ENCODE measurements at regions of chr3 and their contacts with region 1.

Region 1: GRCh38 chr3:76679541-76679940 is 360.4 kb upstream of the ROBO2 start:
- DNase-seq: no peak
- H3K4me3 ChIP-seq: no peak overlapping the region
- H3K27ac ChIP-seq: no peak overlapping the region
- H3K27me3 ChIP-seq: no peaks in the 10 kb centered on the region
- CTCF ChIP-seq: no peak; the same call in 1 of the 2 replicates

Region 2: DNA sequence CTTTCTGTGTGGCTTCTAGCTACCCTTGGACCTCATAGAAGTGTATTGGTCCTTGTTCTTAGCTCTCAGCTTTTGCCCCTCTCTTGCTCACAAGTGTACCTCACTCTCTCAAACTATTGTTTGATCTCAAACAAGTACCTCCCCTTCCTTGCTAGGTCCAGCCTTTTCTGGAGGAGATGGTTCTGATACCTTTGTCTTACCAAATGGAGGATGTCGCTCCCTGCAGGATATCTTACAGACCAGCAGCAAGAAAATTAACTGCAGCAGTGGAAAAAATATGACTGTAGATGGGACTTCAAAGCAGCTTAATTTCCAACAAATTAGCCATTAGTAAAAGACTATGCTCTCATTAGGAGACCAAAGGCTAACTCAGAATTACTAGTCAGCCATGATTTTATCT is 27.8 kb before region 1 on chr3:
- CTCF ChIA-PET with region 1: no interaction called
- POLR2A ChIA-PET with region 1: no interaction called
- DNase-seq: no peak
- H3K4me3 ChIP-seq: no peak overlapping the region
- H3K27ac ChIP-seq: no peak overlapping the region
- H3K27me3 ChIP-seq: no peaks in the 10 kb centered on the region
- CTCF ChIP-seq: 0 out of 2 replicates have a peak, but pooled peaks have one; percentile 11

Region 3: DNA sequence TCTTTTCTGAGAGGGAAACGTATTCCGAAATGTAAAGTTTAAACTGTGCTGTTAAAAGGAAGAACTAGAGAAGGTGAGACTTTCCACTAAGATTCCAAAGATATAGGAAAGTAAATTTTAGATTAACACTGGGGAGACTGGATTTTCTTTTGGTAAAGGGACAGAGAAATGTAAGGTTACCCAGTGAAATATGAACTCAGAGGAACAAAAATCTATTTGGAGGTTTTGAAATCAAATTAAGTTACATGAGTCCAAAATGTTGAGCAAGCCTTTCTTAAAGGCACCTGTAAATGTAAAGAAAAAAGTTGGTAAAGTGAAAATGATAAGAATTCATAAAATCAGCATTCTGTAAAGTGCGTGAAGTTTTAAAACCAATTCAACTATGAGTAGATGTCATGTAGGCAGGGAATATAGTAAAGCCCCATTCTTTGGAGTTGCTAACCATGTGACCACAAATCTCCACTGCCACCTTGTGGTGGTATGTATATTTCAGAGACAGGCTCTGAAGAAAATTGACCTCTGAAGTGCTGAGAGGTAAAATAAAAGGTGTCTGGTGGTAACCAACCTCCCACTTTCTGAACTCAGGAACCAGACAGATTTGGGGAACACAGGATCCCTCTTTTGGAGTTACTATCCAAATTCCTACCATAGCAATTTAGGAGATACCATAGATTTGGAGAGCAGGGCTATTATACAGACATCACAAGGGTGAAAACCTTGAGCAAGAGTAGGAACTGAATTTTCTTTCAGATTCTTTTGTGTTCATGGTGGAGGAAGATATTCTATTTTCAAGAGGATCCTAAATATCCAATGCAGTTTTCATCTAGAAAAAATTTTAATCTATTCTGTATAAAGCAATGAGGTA is 575.7 kb after region 1 on chr3:
- CTCF ChIA-PET with region 1: interaction called, 10 read pairs
- POLR2A ChIA-PET with region 1: no interaction called
- DNase-seq: peak; percentile 37
- H3K4me3 ChIP-seq: no peak overlapping the region
- H3K27ac ChIP-seq: no peak overlapping the region
- H3K27me3 ChIP-seq: no peaks in the 10 kb centered on the region
- CTCF ChIP-seq: peak; percentile 74

Measured in AG04450 (cell line).